Right ventricle myocardium inferior (tissue), 1 donor: ENCODE measurements at regions of chr1 and their contacts with region 1.

Region 1: GRCh38 chr1:9145021-9145668 is 16.2 kb upstream of the GPR157 start:
- DNase-seq: no peak
- ATAC-seq: no peak

Region 2: DNA sequence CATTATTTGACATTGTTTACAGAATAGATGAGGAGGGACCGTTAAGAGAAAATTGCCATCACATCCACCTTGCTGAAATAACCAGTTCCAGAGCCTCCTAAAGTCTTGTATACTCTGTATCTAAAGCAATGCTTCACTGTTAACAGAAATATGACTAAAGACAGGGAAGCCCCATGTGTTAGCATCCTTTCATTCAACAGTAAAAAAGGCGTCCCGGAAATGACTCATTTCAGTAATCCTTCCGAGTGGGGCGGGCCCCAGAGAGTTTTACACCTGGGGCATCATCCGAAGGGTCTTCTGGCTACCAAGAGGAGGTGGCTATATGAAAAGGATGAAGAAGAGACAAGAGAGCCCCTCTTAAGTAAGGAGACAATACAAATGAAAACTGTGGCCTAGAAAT is 600.1 kb before region 1 on chr1:
- intact Hi-C with region 1: no loop called
- DNase-seq: no peak
- ATAC-seq: no peak

Region 3: DNA sequence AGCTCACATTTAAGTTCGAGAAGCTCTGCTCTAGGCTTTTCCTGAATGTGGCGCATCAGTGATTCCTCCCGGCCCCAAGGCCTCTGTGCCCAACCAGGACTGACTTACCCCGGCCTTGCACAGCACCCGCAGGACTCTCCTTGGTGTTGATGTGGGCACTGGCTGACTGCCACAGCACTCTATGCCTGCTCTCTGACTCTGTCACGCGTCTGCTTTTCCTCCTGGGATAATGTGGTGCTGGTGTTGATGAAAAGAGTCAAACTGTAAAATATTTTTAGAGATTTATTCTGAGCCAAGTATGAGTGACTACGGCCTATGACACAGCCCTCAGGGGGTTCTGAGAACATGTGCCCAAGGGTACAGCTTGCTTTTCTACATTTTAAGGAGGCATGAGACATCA is 60.2 kb before region 1 on chr1:
- intact Hi-C with region 1: no loop called
- DNase-seq: peak; percentile 76
- ATAC-seq: peak; percentile 84

Region 4: GRCh38 chr1:9166289-9167235 is 21.4 kb after region 1 on chr1:
- intact Hi-C with region 1: loop called (anchors 2 kb)
- DNase-seq: peak; percentile 58
- ATAC-seq: no peak

Region 5: GRCh38 chr1:9181176-9181906 is 36.2 kb after region 1 on chr1:
- intact Hi-C with region 1: loop called (anchors 5 kb)
- DNase-seq: peak; percentile 86
- ATAC-seq: peak; percentile 70

Region 6: DNA sequence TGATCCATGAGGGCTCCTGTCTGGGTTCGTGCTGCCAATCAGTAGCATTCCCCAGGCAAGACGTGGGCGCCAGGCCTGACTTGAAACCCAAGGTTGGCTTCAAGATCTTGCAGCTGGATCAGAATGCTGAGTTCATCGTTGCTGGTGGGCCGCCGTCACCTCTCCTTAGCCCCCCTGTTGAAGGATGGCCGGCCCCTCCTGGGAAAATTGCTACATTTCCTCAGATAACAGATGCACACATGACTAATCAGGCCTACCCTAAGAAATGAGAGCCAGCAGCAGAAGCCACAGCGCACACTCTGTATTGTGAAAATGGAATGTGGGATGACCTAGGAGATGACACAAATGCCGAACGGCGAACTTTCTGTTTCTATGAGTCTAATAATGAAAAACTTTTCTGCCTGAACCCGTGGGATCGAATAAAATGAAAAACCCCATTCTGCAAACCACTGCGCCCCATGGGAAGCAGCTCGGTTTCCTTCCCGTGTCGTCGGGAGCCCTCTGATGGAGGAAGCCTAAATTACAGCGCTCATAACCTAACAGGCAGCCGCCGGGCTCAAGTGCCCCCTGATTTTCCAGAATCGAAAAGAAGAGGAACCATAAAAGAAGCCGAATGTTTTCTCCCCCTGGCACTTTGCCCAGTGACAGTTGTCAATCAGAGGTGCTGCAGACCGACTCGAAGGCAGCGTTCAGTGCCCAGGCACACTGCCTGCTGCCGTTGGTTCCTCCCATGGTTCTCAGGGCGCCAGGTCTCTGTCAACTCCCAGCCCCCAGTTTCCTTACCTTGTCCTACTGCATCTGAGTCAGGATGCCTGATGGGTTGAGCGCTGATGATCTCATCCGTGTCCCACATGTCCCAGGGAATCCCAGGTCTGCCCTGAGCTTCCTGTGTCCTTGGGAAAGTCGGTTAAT is 51.2 kb after region 1 on chr1:
- intact Hi-C with region 1: loop called (anchors 1 kb)
- DNase-seq: peak; percentile 83
- ATAC-seq: peak; percentile 73